PC-9 (cell line): ENCODE measurements at regions of chr18 and their contacts with region 1.

Region 1: DNA sequence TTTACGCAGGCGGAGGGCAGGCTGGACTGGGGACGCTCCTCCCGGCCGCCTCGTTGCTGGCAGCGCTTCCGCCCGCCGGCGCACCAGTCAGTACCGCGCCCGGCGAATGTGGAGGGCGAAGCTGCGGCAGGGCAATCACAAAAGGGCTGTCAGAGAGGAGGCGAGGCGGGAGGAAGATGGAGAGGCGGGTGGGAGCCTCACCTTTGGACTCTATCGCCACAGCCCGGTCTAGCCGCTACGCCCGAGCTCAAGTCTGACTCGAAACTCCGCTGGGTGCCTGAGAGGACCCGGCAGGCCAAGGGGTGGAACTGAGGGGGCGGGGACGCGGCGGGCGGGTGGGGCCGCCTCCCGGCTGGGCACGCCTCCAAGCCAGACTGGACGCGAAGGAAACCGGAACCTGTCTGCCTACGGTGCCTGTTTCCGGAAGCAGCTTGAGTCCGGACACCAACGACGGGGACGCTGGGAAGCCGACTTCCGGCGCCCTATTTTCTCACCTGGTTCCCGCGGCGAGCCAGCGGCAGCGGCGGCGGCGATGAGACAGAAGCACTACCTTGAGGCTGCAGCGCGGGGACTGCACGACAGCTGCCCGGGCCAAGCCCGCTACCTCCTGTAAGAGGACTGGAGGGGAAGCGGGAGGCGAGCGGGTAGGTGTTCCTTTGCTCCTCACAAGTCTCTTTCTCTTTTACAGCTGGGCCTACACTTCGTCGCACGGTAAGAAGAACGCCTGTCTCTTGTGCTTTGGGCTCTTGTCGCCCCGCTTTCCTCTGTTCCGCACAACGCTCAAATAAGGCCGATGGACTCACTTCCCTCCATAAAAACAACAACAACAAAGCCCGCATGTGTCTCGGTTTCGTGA is at the start of gene RMP24:
- DNase-seq: peak; percentile 76 to 89
- H3K4me3 ChIP-seq: peak within 1 kb of the TSS; percentile 82
- H3K27ac ChIP-seq: peak within 1 kb of the TSS; percentile 79
- H3K4me1 ChIP-seq: peaks cover 17% of the 10 kb centered on the region
- H3K27me3 ChIP-seq: no peaks in the 10 kb centered on the region
- CTCF ChIP-seq: no peak

Region 2: GRCh38 chr18:35290073-35290735 is 682.2 kb before region 1 on chr18 and contains the start of gene ZSCAN30:
- CTCF ChIA-PET with region 1: no interaction called
- POLR2A ChIA-PET with region 1: no interaction called
- intact Hi-C with region 1: loop called (anchors 2 kb)
- DNase-seq: peak; percentile 75 to 88
- H3K4me3 ChIP-seq: peak within 1 kb of the TSS; percentile 82
- H3K27ac ChIP-seq: peak within 1 kb of the TSS; percentile 54
- H3K4me1 ChIP-seq: peaks cover 3% of the 10 kb centered on the region; the same call in 1 of the 2 replicates
- H3K27me3 ChIP-seq: no peaks in the 10 kb centered on the region
- CTCF ChIP-seq: no peak
- total RNA-seq, gene ZSCAN30: 16.9 and 18.5 TPM in 2 replicates

Region 3: GRCh38 chr18:35890323-35890722 is 82.1 kb before region 1 on chr18:
- CTCF ChIA-PET with region 1: no interaction called
- POLR2A ChIA-PET with region 1: no interaction called
- intact Hi-C with region 1: no loop called
- DNase-seq: no peak
- H3K4me3 ChIP-seq: no peak overlapping the region
- H3K27ac ChIP-seq: no peak overlapping the region
- H3K4me1 ChIP-seq: no peaks in the 10 kb centered on the region
- H3K27me3 ChIP-seq: no peaks in the 10 kb centered on the region
- CTCF ChIP-seq: no peak

Region 4: GRCh38 chr18:36107477-36107876 is 135.1 kb after region 1 on chr18:
- CTCF ChIA-PET with region 1: no interaction called
- POLR2A ChIA-PET with region 1: no interaction called
- intact Hi-C with region 1: no loop called
- DNase-seq: no peak
- H3K4me3 ChIP-seq: no peak overlapping the region
- H3K27ac ChIP-seq: no peak overlapping the region
- H3K4me1 ChIP-seq: no peaks in the 10 kb centered on the region
- H3K27me3 ChIP-seq: no peaks in the 10 kb centered on the region
- CTCF ChIP-seq: no peak